Activated T-helper 1 cell treated with anti-CD3 and anti-CD28 coated beads, Interleukin-12 subunit alpha, Interleukin-12 subunit beta, Interleukin-2, Interleukin-4 antibody, amounts not matched to agents 30 ng/mL and 10 ng/mL and 1 ng/mL, durations not matched to agents 14 hours and 24 hours and 36 hours (primary cell): ENCODE measurements at regions of chr1 and their contacts with region 1.

Region 1: GRCh38 chr1:15128520-15129313 is 24.8 kb upstream of the TMEM51 start:
- DNase-seq: peak; percentile 62
- H3K4me3 Mint-ChIP-seq: no peak overlapping the region
- H3K27ac Mint-ChIP-seq: no peak overlapping the region
- H3K4me1 Mint-ChIP-seq: no peaks in the 10 kb centered on the region
- H3K27me3 Mint-ChIP-seq: peaks cover 8% of the 10 kb centered on the region

Region 2: DNA sequence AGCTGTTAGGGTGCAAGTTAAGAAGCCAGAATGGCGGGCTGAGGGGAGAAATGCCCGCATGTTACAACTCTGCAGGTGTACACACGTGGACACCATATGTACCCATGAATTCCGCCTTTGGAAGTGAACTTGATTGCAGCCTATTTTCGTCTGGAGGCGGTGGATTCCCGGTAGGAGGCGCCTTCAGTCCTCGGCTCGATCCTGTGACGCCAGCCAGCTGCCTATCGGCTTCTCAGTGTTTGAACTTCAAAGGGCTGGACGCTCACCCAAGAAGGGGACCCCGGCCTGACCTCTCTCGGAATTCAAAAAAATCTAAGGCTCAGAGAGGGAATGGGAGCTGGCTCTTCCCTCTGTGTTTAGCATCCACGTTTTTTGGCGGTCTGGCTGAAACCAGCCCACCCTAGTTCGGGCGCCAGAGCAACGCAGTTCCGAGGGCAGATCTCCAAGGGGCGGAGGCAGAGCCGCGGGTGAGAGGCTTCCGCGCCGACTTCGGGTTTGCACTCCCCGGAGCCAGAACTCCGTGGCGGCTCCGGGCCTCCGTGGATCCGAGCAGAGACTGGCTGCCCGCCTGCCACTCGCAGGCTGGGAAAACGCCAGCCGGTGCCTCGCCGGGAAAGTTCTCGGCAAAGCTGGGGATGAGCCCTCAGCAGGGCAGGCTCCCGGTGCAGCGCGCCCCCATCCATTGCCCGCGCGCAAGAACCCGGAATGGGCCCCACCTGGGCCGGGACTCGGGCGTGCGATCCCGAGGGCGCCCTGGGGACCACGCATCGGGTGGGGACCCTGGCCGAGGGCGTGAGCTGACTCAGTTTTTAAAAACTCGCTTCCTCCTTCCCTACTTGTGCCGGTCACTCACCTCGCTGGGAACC is 23.8 kb after region 1 on chr1:
- intact Hi-C with region 1: loop called (anchors 2 kb)
- DNase-seq: no peak
- H3K4me3 Mint-ChIP-seq: peak overlapping the region; percentile 68
- H3K27ac Mint-ChIP-seq: no peak overlapping the region
- H3K4me1 Mint-ChIP-seq: peaks cover 24% of the 10 kb centered on the region
- H3K27me3 Mint-ChIP-seq: peaks cover 46% of the 10 kb centered on the region

Region 3: DNA sequence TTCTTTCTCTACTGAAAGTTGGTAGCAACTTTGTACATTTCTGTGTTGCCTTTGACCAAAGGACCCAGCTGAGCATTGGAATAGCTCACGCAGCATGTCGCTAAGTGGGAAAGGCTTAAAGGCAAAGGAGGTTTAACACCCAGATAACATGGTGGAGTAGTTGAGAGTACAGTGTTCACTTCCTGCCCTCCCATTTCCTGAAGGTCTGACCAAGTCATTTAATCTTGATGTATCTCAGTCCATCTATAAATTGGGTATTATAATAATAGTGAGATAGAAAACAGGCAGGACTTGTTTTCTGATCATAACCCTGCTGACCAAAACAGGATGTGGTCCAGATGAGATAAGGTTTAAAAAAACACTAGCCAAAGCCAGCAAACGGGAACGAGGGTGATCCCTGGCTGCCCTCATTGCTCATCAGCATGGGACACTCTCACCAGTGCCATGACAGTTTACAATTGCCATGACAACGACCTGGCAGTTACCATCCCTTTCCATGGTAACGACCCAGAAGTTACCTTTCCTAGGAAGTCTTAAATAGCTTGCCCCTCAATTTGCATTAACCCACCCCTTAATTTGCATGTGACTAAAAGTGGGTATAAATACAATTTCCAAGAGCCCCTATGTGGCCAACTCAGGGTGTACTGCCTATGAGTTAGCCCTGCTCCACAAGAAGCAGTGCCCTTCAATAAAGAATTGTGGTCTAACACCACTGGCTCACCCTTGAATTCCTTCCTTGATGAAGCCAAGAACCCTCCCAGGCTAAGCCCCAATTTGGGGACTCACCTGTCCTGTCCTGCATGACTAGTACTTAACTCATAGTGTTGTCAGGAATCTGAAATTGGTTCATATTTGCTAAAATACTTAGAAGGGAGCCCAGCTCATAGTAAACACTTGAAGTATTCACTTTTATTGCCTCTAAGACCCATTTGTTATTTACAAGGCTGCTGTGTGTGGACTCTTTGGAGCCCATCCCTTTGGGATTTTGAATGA is 89.9 kb after region 1 on chr1:
- intact Hi-C with region 1: loop called (anchors 5 kb)
- DNase-seq: no peak
- H3K4me3 Mint-ChIP-seq: no peak overlapping the region
- H3K27ac Mint-ChIP-seq: no peak overlapping the region
- H3K4me1 Mint-ChIP-seq: peaks cover 5% of the 10 kb centered on the region
- H3K27me3 Mint-ChIP-seq: peaks cover 30% of the 10 kb centered on the region

Region 4: GRCh38 chr1:15272009-15272788 is 143.5 kb after region 1 on chr1:
- intact Hi-C with region 1: loop called (anchors 1 kb)
- DNase-seq: peak; percentile 12
- H3K4me3 Mint-ChIP-seq: no peak overlapping the region
- H3K27ac Mint-ChIP-seq: no peak overlapping the region
- H3K4me1 Mint-ChIP-seq: peaks cover 8% of the 10 kb centered on the region
- H3K27me3 Mint-ChIP-seq: peaks cover 23% of the 10 kb centered on the region

Region 5: GRCh38 chr1:15304701-15305467 is 176.2 kb after region 1 on chr1:
- intact Hi-C with region 1: loop called (anchors 1 kb)
- DNase-seq: peak; percentile 36
- H3K4me3 Mint-ChIP-seq: no peak overlapping the region
- H3K27ac Mint-ChIP-seq: no peak overlapping the region
- H3K4me1 Mint-ChIP-seq: no peaks in the 10 kb centered on the region
- H3K27me3 Mint-ChIP-seq: no peaks in the 10 kb centered on the region

Region 6: DNA sequence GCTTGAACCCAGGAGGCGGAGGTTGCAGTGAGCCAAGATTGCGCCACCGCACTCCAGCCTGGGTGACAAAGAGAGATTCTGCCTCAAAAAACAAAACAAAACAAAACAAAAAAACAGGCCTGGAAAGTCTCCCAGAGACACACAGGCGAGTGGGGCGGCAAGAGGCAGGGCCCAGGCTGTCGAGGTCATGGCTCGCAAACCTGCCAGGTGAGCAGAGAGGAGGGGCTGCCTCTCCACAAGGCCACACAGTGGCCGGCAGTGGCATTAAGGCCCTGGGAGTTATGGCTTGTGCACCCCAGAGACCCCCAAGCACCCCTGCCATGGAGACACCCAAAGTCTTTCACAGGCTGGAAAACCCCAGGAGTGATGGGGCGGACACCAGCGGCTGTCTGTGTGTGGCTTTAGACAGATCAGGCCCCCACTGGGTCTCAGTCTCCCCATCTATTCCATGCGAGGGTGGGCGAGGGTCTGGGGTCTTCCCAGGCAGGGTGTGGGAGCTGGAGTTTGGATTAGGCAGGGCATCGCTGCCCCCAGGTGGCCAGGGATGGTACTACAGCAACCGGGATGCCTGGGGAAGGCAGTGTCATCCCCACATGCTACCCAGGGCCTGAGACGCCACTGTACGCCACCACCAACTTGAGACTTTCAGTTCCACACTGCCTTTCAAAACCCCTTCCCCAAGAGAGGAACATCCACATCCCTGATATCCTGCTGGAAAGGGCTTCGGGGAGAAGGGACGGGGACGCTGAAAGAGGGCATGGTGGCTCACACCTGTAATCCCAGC is 302.3 kb after region 1 on chr1:
- intact Hi-C with region 1: loop called (anchors 5 kb)
- DNase-seq: peak; percentile 47
- H3K4me3 Mint-ChIP-seq: no peak overlapping the region
- H3K27ac Mint-ChIP-seq: no peak overlapping the region
- H3K4me1 Mint-ChIP-seq: peaks cover 13% of the 10 kb centered on the region
- H3K27me3 Mint-ChIP-seq: no peaks in the 10 kb centered on the region